ENCODE measurements at regions of chr3 and their contacts with region 1.

Region 1: GRCh38 chr3:33277193-33277882 is at the start of gene FBXL2:
- DNase-seq: peak; percentile 54 to 88
- H3K4me3 ChIP-seq: peak within 1 kb of the TSS; percentile 72
- H3K27ac ChIP-seq: no peak within 1 kb of the TSS
- H3K4me1 ChIP-seq: peaks cover 5% of the 10 kb centered on the region; the same call in 1 of the 2 replicates
- H3K27me3 ChIP-seq: no peaks in the 10 kb centered on the region
- CTCF ChIP-seq: no peak
- total RNA-seq, gene FBXL2: 15.8 and 18.5 TPM in 2 replicates

Region 2: DNA sequence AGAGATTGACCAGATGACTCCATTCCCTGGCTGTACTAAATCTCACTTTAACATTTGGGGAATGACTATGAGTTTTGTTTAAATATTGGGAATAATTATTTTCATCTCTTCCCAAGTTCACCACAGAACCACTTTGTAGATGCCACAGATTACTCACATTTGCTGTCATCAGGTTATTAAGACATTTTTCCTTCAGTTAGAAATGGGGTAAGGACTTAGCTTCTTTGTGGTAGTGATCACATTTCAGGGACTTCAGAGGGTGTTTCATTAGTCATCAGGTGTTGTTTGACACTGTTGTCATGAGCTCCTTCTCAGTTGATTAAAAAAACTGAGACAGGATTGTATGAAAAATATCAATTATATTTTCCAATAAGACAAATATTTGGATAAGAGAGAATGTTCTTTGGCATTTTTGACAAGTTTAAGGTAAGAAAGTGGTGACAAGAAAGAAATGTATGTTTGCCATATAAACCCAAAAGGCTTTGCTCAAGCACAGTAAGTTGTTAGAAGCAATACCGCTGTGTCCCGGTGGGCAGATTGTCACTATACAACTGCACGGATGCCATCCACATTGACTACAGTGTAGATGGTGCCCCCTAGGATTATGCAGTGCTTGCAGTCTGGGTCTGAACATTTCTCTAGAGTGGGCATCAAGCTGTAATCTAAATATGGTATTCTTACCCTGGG is 22.2 kb after region 1 on chr3:
- CTCF ChIA-PET with region 1: no interaction called
- POLR2A ChIA-PET with region 1: interaction called, 10 read pairs
- intact Hi-C with region 1: no loop called
- DNase-seq: peak; percentile 55 to 77
- H3K4me3 ChIP-seq: no peak overlapping the region
- H3K27ac ChIP-seq: peak overlapping the region; percentile 84
- H3K4me1 ChIP-seq: peaks cover 15% of the 10 kb centered on the region
- H3K27me3 ChIP-seq: no peaks in the 10 kb centered on the region
- CTCF ChIP-seq: no peak

Region 3: GRCh38 chr3:33318709-33319380 is 41.5 kb after region 1 on chr3:
- CTCF ChIA-PET with region 1: interaction called, 4 read pairs
- POLR2A ChIA-PET with region 1: no interaction called
- intact Hi-C with region 1: loop called (anchors 5 kb)
- DNase-seq: no peak
- H3K4me3 ChIP-seq: no peak overlapping the region
- H3K27ac ChIP-seq: no peak overlapping the region
- H3K4me1 ChIP-seq: peaks cover 34% of the 10 kb centered on the region
- H3K27me3 ChIP-seq: no peaks in the 10 kb centered on the region
- CTCF ChIP-seq: no peak

Region 4: GRCh38 chr3:33392703-33393125 is 115.4 kb after region 1 on chr3:
- CTCF ChIA-PET with region 1: no interaction called
- POLR2A ChIA-PET with region 1: interaction called, 11 read pairs
- intact Hi-C with region 1: no loop called
- DNase-seq: peak; percentile 32 to 72
- H3K4me3 ChIP-seq: no peak overlapping the region
- H3K27ac ChIP-seq: peak overlapping the region; percentile 32; the same call in 1 of the 2 replicates
- H3K4me1 ChIP-seq: peaks cover 15% of the 10 kb centered on the region
- H3K27me3 ChIP-seq: no peaks in the 10 kb centered on the region
- CTCF ChIP-seq: no peak

Measured in PC-9 (cell line).